ENCODE measurements at regions of chr6 and their contacts with region 1.

Region 1: GRCh38 chr6:164097557-164098398 is 683.3 kb downstream of the QKI start:
- DNase-seq: no peak
- ATAC-seq: peak; percentile 33

Region 2: DNA sequence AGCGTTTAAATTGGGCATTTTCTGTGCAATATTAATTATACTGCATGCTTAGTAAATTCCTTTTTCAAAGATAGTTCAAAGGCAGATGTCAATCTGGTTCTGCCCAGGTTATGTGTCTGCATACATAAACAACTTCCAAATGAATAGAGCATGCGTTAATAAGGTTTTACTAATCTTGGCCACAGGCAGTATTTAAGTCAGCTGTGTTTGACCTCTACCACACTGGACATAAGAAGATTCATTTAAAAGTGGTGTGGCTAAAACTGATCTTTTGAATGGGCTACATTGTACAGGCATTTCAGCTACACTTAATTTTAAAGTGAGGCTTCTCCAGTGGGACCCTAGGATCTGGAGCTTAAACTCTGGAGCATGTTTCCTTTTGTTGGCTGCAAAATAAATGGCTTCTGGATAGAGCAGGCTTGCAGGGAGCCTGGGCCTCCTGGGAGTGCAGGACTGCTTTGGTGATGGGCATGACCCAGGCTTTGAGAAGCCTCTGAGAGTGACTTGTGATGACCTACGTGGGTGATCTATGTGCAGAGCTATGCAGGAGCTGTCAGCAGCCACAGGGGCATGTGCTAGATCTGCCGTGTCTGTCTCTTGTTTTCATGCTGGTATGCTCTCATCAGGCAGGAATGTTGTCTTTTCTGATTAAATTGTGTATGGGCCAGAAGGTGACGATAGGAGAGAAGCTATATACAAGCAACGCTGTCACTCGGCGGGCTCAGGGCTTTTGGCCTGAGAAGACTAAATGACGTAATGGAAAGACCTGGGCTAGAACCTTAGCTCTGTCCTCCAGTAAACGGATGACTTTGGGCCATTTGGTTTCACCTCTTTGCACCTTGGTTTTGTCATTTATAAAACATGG is 352.0 kb before region 1 on chr6:
- intact Hi-C with region 1: loop called (anchors 2 kb)
- DNase-seq: no peak
- ATAC-seq: peak; percentile 94

Region 3: GRCh38 chr6:163965426-163966348 is 132.1 kb before region 1 on chr6:
- intact Hi-C with region 1: loop called (anchors 1 kb)
- DNase-seq: no peak
- ATAC-seq: peak; percentile 58

Measured in Right ventricle myocardium inferior (tissue), 1 donor.